Dendritic cell treated with granulocyte-macrophage colony-stimulating factor and Interleukin-4, amounts not matched to agents 40 ng/mL and 50 ng/mL, for 4 days (primary cell): ENCODE measurements at regions of chrX and their contacts with region 1.

Region 1: GRCh38 chrX:134251241-134251640 is 14.3 kb downstream of the CCDC160 start:
- H3K4me3 Mint-ChIP-seq: no peak overlapping the region
- H3K27ac Mint-ChIP-seq: no peak overlapping the region
- H3K4me1 Mint-ChIP-seq: no peaks in the 10 kb centered on the region
- H3K27me3 Mint-ChIP-seq: no peaks in the 10 kb centered on the region

Region 2: DNA sequence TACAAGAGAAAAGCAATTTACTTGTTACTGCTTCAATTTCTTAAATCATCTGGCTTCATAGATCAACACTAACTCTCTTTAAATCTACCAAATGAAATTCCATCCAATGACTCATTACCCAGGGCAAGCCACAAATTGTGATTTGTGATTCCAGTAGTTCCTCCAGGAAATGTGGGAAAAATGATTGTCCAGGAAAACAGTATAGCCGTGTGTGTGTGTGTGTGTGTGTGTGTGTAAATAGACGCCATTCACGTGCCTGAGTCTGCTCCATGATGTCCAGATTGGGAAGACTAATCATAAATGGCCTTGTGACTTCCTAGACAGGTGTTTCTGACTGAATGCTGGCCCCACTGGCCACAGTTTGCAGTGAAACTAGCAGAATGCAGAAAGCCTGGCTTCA is 1414.1 kb before region 1 on chrX:
- intact Hi-C with region 1: no loop called
- H3K4me3 Mint-ChIP-seq: no peak overlapping the region
- H3K27ac Mint-ChIP-seq: no peak overlapping the region
- H3K4me1 Mint-ChIP-seq: no peaks in the 10 kb centered on the region
- H3K27me3 Mint-ChIP-seq: no peaks in the 10 kb centered on the region

Region 3: DNA sequence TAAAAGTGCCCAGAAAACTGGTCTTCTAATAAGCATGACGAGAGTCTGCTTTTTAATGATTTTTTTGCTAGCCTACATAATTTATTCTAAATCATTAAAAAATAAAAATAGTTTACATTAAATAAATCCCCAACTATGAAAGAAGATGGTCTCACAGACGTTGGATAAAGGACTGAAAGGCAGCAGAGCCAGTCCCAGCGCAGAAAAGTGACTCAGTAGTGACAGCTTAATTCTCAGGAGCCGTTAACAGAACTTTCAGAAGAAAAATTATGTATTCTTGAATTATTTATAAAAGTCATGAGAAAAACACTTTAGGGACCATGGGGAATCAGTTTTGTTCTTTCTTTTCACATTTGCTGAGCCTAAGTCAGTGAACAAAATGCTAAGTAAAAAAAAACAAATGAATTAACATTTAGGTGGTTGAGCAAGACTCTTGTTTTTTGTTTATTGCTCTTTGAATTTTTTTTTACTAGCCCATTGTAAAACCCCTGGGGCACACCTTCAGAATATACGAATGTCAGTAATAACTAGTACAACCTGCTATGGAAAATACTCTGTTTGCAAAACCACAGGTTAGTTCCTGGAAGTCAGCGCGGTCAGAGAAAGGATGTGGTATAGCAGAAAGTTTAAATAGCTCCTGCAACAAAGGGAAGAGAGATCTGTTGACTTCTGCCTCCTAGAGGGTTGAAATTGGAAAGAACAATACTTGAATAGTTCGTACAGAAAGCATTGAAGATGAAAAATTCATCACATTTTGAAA is 64.7 kb before region 1 on chrX:
- intact Hi-C with region 1: no loop called
- H3K4me3 Mint-ChIP-seq: no peak overlapping the region
- H3K27ac Mint-ChIP-seq: no peak overlapping the region
- H3K4me1 Mint-ChIP-seq: no peaks in the 10 kb centered on the region
- H3K27me3 Mint-ChIP-seq: no peaks in the 10 kb centered on the region

Region 4: GRCh38 chrX:134396174-134396573 is 144.9 kb after region 1 on chrX:
- intact Hi-C with region 1: loop called (anchors 10 kb)
- H3K4me3 Mint-ChIP-seq: no peak overlapping the region
- H3K27ac Mint-ChIP-seq: no peak overlapping the region
- H3K4me1 Mint-ChIP-seq: peaks cover 9% of the 10 kb centered on the region
- H3K27me3 Mint-ChIP-seq: no peaks in the 10 kb centered on the region